Activated CD4-positive, alpha-beta memory T cell treated with anti-CD3 and anti-CD28 coated beads, Interleukin-2, amount 10 ng/mL, durations not matched to agents 7 days and 5 days (primary cell): ENCODE measurements at regions of chr19 and their contacts with region 1.

Region 1: DNA sequence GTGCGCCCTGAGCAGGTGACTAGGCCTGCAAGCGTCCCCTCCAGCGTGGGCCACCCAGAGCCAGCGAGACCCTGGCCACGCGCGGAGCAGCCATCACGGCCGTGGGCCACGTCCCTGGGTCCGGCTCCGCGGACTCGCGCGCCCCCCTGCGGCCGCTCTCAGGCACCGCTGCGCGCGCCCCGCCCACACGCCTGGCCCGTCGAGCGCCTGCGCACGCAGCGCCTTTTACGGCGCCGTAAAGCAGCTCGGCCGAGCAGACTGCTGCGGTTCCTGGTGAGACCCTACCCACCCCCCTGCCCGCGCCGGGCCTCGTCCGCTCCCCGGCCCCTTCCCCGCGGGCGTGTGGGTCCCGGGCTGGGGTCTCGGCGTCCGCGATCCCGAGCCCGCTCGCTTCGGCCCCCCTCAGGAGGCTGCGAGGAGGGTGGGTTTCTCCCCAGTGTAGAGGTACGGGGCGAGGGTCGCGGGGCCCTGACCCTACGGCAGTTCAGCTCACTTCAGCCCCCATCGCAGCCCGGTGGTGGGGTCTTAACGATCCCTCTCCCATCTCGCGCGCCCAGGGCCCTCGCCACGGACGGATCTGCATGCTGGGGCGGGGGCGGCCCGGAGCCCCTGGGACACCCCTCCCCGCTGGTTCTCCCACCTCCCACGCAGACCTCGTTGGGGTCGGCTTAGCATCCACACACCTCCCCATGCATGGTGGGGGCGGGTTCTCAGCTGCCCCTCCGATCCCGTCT is at the start of gene TRAPPC5:
- DNase-seq: peak; percentile 89
- H3K4me3 Mint-ChIP-seq: peak within 1 kb of the TSS; percentile 88
- H3K27ac Mint-ChIP-seq: peak within 1 kb of the TSS; percentile 84
- H3K4me1 Mint-ChIP-seq: peaks cover 44% of the 10 kb centered on the region
- H3K27me3 Mint-ChIP-seq: peaks cover 29% of the 10 kb centered on the region
- total RNA-seq, gene TRAPPC5: 92.5 to 94.7 TPM

Region 2: DNA sequence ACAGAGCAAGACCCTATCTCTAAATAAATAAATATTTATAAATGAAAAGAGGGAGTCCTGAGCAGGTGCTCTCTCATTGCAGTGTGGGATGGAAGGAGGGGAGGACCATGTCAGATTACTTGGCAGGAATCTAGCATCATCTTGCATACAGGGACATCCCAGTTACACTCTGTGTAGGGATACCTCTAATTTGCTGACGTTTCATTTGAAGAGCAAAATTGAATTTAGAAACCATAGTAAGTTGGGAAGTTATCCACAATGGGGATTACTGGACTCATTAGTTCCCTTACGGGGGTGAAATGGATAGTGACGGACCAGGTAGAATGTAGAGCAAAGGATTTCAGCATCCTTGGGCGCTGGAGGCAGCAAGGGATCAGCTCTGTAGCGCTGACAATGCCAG is 280.0 kb before region 1 on chr19:
- CTCF ChIA-PET with region 1: no interaction called
- POLR2A ChIA-PET with region 1: no interaction called
- DNase-seq: no peak
- H3K4me3 Mint-ChIP-seq: no peak overlapping the region
- H3K27ac Mint-ChIP-seq: no peak overlapping the region
- H3K4me1 Mint-ChIP-seq: peaks cover 18% of the 10 kb centered on the region
- H3K27me3 Mint-ChIP-seq: no peaks in the 10 kb centered on the region

Region 3: GRCh38 chr19:7562646-7563393 is 118.0 kb before region 1 on chr19:
- CTCF ChIA-PET with region 1: interaction called, 44 read pairs
- POLR2A ChIA-PET with region 1: interaction called, 6 read pairs
- DNase-seq: no peak
- H3K4me3 Mint-ChIP-seq: no peak overlapping the region
- H3K27ac Mint-ChIP-seq: no peak overlapping the region
- H3K4me1 Mint-ChIP-seq: peaks cover 3% of the 10 kb centered on the region
- H3K27me3 Mint-ChIP-seq: no peaks in the 10 kb centered on the region

Region 4: DNA sequence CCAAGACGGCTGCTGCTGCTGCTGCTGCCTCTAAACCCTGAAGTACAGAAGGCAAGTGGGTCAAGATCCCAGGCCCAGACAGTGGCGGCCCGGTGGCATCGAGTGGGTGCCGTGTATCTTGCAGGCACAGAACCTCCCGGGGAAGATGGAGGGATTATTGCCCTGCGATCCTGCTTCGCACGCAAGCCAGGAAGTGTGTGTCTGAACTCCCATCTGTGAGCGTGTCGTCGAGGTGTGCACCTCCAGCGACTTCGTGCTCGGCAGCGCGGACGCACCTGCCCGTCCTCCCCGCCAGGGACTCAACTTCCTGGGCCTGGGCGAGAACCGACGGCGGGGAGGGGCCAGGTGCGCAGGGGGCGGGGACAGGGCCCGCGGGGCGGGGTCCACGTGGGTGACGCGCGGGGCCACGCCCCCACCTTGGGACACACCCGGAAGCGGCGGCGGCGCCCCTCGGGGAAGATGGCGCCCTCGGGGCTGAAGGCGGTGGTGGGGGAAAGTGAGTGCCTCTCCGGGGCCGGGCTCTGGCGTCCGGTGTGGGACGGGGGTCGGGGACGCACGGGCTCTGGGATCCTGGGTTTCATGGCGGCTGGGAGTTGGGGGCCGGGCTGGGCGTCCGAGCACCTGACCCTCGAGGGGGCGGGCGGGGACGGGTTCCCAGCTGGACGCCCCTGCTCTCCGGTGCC is 43.9 kb before region 1 on chr19 and contains the start of gene STXBP2:
- CTCF ChIA-PET with region 1: interaction called, 15 read pairs
- POLR2A ChIA-PET with region 1: interaction called, 5 read pairs
- DNase-seq: peak; percentile 94
- H3K4me3 Mint-ChIP-seq: peak within 1 kb of the TSS; percentile 79
- H3K27ac Mint-ChIP-seq: peak within 1 kb of the TSS; percentile 84
- H3K4me1 Mint-ChIP-seq: peaks cover 38% of the 10 kb centered on the region
- H3K27me3 Mint-ChIP-seq: no peaks in the 10 kb centered on the region
- total RNA-seq, gene STXBP2: 169 to 171 TPM

Region 5: GRCh38 chr19:7670150-7670783 is 10.5 kb before region 1 on chr19:
- CTCF ChIA-PET with region 1: interaction called, 23 read pairs
- POLR2A ChIA-PET with region 1: no interaction called
- DNase-seq: no peak
- H3K4me3 Mint-ChIP-seq: peak overlapping the region; percentile 13
- H3K27ac Mint-ChIP-seq: no peak overlapping the region
- H3K4me1 Mint-ChIP-seq: peaks cover 18% of the 10 kb centered on the region
- H3K27me3 Mint-ChIP-seq: peaks cover 30% of the 10 kb centered on the region

Region 6: GRCh38 chr19:7799640-7800355 is 119.0 kb after region 1 on chr19:
- CTCF ChIA-PET with region 1: interaction called, 55 read pairs
- POLR2A ChIA-PET with region 1: interaction called, 4 read pairs
- DNase-seq: peak; percentile 61
- H3K4me3 Mint-ChIP-seq: no peak overlapping the region
- H3K27ac Mint-ChIP-seq: no peak overlapping the region
- H3K4me1 Mint-ChIP-seq: peaks cover 1% of the 10 kb centered on the region
- H3K27me3 Mint-ChIP-seq: peaks cover 51% of the 10 kb centered on the region

Region 7: DNA sequence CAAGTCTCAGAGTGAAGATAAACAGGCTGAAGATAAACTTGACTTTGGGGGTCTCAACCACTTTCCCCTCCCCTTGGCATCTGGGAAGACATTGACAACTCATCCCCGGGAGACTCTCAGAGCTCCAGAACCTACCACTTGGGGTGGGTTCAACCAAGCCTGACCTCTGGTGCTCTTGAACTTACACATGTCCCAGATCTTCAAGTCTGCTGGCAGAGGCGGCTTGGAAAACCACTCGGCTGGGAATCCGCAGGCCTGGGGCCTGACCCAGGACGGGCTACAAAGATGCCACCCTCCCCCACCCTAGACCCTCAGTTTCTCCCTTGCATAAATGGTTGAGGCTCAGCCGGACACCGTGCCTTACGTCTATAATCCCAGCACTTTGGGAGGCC is 208.0 kb after region 1 on chr19:
- CTCF ChIA-PET with region 1: no interaction called
- POLR2A ChIA-PET with region 1: no interaction called
- DNase-seq: no peak
- H3K4me3 Mint-ChIP-seq: no peak overlapping the region
- H3K27ac Mint-ChIP-seq: no peak overlapping the region
- H3K4me1 Mint-ChIP-seq: peaks cover 3% of the 10 kb centered on the region
- H3K27me3 Mint-ChIP-seq: peaks cover 7% of the 10 kb centered on the region

Region 8: GRCh38 chr19:8113016-8113416 is 432.2 kb after region 1 on chr19:
- CTCF ChIA-PET with region 1: no interaction called
- POLR2A ChIA-PET with region 1: no interaction called
- DNase-seq: no peak
- H3K4me3 Mint-ChIP-seq: no peak overlapping the region
- H3K27ac Mint-ChIP-seq: no peak overlapping the region
- H3K4me1 Mint-ChIP-seq: no peaks in the 10 kb centered on the region
- H3K27me3 Mint-ChIP-seq: peaks cover 4% of the 10 kb centered on the region